ENCODE measurements at regions of chr19 and their contacts with region 1.

Region 1: DNA sequence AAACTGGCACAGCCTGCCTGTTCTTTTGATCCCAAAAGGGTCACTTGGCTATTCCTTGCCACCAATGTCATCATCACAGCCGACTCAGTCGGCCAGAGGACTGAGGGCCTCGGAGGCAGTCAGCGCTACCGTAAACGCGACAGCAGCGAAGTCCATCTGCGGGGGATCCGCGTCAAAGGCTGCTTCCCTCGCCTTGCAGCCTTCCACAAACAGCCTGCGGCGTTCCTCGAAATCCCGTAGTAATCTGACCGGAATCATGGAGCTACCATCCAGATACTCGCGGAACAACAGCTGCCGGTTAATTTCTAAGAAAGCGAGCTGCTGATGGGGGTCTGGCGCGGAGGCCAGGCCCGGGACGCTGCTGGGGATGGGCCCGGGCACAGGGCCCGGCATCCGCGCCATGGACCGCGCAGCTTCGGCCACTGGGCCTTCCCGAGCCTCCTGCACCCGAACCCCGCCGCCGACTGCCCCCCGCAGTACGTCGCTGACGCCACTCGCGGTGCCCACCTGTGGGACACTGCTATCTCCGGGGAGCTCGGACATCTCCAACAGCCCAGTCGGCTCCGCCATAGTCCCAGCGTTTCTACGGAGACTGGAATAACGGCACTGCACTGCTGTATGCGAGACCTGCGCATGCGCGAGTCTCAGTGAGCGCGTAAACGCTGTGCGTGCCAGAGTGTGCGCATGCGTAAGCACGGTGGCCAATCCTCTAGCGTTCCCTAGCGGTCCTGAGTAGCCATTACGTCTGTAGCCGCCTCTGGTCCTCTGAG is at the start of gene EID2B:
- DNase-seq: peak; percentile 95 to 98
- ATAC-seq: peak; percentile 98 to 99 (median 99)
- H3K4me3 ChIP-seq: peak within 1 kb of the TSS; percentile 86
- H3K27ac ChIP-seq: peak within 1 kb of the TSS; percentile 71
- H3K4me1 ChIP-seq: peaks cover 14% of the 10 kb centered on the region
- H3K27me3 ChIP-seq: no peaks in the 10 kb centered on the region
- CTCF ChIP-seq: peak; percentile 97
- total RNA-seq, gene EID2B: 0.71 to 1.9 (median 1.7) TPM

Region 2: DNA sequence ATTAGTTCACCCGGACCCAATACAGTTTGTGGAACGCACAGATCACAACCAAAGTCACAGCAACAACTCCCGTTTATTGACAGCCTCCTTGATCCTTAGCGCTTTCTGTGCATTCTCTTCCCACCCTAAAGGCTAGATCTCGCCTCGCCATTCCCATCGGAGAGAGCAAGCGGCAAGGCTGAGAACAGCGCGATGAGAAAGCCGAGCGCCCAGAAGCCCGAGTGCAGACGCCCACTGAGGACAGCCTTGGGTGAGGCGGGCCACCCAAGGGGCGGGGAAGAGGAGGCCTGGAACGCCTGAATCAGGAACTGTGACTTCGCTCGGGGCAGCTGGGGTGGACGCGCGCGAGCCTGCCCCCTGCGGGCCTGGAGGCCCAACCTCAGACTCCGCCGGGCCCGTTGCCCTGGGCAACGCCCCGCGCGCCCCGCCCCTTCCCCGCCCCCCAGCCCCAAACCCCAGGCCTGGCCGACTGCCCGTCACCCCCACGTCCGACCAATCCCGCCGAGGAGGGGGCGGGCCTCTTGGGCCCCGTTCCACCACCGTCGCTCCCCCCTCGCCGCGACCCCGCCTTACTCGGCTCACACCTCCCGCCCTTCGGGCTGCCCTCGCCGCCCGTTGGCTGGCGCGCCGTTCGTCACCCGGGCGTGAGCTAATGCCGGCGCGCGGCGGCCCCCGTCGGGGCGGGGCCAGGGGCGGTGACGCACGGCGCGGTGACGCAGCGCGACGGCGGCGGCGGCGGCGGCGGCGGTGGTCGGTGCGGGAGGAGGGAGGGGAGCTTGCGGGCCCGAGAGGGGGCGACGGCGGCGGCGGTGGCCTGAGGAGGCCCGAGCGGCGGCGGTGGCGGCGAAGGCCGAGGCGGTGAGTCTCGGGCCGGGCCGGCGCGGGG is 190.5 kb before region 1 on chr19 and contains the start of gene SAMD4B:
- intact Hi-C with region 1: loop called (anchors 5 to 10 kb)
- DNase-seq: peak; percentile 99 to 100
- ATAC-seq: peak; percentile 94 to 97 (median 96)
- H3K4me3 ChIP-seq: peak within 1 kb of the TSS; percentile 91
- H3K27ac ChIP-seq: peak within 1 kb of the TSS; percentile 86
- H3K4me1 ChIP-seq: peaks cover 34% of the 10 kb centered on the region
- H3K27me3 ChIP-seq: no peaks in the 10 kb centered on the region
- CTCF ChIP-seq: peak; percentile 79
- total RNA-seq, gene SAMD4B: 34.7 to 66.4 (median 51.7) TPM

Region 3: DNA sequence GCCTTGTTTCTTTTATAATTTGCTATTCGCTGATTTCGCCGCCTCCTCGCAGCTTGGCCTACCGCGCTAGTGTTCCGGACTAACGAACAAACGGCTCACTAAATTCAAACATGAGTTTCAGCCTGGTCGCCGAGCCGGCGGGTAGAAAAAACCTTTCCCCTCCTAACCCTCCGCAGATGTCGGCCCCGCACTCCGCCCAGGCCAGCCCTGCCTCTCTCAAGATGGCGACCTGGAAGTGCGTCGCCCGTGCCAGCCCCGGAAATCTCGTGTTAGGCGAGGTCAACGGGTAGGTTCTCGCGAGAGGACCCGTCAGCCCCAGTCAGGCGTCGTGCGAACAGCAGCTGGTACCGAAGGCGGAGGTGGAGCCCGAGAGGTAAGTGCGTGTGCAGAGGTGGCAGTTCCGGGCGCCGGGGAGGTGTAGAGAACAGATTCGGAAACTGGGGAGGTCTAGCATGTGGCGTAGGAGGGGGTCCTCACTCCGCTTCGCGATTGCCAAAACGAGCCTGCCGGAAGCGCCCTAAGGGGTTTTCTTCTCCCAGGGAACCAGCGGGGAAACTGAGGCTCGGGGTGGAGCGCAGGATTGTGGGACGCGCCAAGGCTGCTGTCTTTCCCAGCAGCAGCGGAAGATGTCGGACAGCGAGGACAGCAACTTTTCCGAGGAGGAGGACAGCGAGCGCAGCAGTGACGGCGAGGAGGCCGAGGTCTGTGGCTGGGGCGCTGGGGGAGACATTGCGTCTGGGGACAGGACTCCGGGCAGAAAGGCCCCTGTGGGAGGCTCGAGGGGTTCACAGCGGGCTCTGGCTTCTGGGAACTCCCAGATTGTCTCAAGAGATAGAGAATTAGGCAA is 86.9 kb before region 1 on chr19 and contains the start of gene SUPT5H:
- intact Hi-C with region 1: loop called (anchors 10 kb)
- DNase-seq: peak; percentile 97 to 98
- ATAC-seq: peak; percentile 98 to 100 (median 99)
- H3K4me3 ChIP-seq: peak within 1 kb of the TSS; percentile 90
- H3K27ac ChIP-seq: peak within 1 kb of the TSS; percentile 95
- H3K4me1 ChIP-seq: peaks cover 32% of the 10 kb centered on the region
- H3K27me3 ChIP-seq: no peaks in the 10 kb centered on the region
- CTCF ChIP-seq: no peak
- total RNA-seq, gene SUPT5H: 60.7 to 88.6 (median 80.2) TPM

Region 4: GRCh38 chr19:39474139-39474622 is 58.2 kb before region 1 on chr19:
- intact Hi-C with region 1: loop called (anchors 1 to 2 kb)
- DNase-seq: peak; percentile 62 to 82
- ATAC-seq: peak; percentile 61 to 85 (median 72)
- H3K4me3 ChIP-seq: no peak overlapping the region
- H3K27ac ChIP-seq: no peak overlapping the region
- H3K4me1 ChIP-seq: no peaks in the 10 kb centered on the region
- H3K27me3 ChIP-seq: no peaks in the 10 kb centered on the region
- CTCF ChIP-seq: peak; percentile 60

Region 5: DNA sequence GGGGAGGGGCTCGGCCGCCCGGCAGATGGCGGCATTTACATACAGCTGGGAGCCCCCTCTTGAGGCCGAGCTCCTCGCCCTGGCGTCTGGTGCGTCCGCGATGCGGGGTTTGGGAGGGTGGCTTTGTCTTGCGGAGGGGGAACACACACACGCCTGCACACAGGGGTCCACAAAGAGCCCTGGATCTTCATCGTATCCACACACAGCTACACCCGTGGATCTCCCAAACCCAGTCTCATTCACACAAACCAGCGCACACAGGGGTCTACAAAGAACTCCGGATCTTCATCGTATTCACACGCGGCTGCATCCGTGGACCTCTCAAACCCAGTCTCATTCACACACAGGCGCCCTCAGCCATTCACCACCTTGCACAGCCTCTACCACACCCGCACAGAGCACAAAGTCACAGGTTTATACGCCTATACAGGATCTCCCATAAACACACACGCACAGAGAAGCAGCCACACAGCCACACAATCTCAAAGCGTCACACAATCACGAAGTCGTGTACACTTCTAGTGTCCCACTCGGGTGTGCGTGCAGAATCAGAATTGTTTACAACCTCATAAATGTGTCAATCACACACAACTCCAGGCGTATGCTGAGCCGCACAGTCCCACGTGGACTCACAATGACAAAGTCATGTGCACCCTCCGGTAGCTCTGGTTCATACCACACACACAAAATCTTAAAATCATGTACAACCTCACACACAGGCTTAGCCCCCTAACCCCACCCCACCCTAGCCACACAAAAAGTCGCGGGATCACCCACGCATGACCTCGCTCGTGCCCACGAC is 34.2 kb before region 1 on chr19:
- intact Hi-C with region 1: loop called in 1 of 2 experiments (anchors 5 kb)
- DNase-seq: no peak
- ATAC-seq: peak; percentile 45 to 77 (median 70)
- H3K4me3 ChIP-seq: peak overlapping the region; percentile 34
- H3K27ac ChIP-seq: no peak overlapping the region
- H3K4me1 ChIP-seq: peaks cover 18% of the 10 kb centered on the region
- H3K27me3 ChIP-seq: peaks cover 0 to 67% (median 24%) of the 10 kb centered on the region in 3 donors
- CTCF ChIP-seq: peak; percentile 49

Measured in psoas muscle (tissue), 8 donors.